Right lobe of liver (tissue), 6 donors: ENCODE measurements at regions of chr20 and their contacts with region 1.

Region 1: GRCh38 chr20:5205348-5206210 is 78.8 kb downstream of the CDS2 start:
- DNase-seq: peak; percentile 76 to 84 (median 82)
- ATAC-seq: peak; percentile 90 to 98 (median 94)
- H3K4me3 ChIP-seq: no peak overlapping the region
- H3K27ac ChIP-seq: no peak overlapping the region
- H3K4me1 ChIP-seq: peaks cover 0 to 23% (median 9%) of the 10 kb centered on the region in 4 donors
- H3K27me3 ChIP-seq: no peaks in the 10 kb centered on the region
- CTCF ChIP-seq: peak; percentile 85 to 97 (median 92)
- POLR2A ChIP-seq: no peak

Region 2: DNA sequence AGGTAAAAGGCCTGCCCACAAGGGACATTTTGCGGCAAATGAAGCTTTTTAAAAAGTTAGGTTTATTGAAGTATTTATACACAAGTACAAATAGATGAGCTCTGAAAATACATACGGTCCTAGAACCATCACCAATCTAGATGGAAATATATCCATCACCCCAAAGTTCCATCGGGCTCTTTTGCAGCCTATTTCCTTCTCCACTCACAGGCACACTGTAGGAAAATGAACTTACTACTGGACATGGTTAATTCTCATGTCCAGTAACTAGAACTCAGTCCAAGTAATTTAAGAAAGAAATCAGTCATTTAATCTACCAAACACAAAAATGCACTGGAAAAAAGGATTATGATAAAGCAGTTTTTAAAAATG is 92.0 kb before region 1 on chr20:
- intact Hi-C with region 1: no loop called
- DNase-seq: no peak
- ATAC-seq: no peak
- H3K4me3 ChIP-seq: peak overlapping the region; percentile 60 to 73 (median 69)
- H3K27ac ChIP-seq: peak overlapping the region; percentile 86 to 96 (median 87)
- H3K4me1 ChIP-seq: peaks cover 0 to 15% (median 6%) of the 10 kb centered on the region in 4 donors
- H3K27me3 ChIP-seq: no peaks in the 10 kb centered on the region
- CTCF ChIP-seq: no peak
- POLR2A ChIP-seq: no peak

Region 3: GRCh38 chr20:5126512-5127203 is 78.9 kb before region 1 on chr20 and contains the start of gene CDS2:
- intact Hi-C with region 1: no loop called
- DNase-seq: peak; percentile 100
- ATAC-seq: peak; percentile 90 to 97 (median 94)
- H3K4me3 ChIP-seq: peak within 1 kb of the TSS; percentile 62 to 92 (median 90)
- H3K27ac ChIP-seq: peak within 1 kb of the TSS; percentile 87 to 95 (median 92)
- H3K4me1 ChIP-seq: peaks cover 0 to 13% (median 7%) of the 10 kb centered on the region in 4 donors
- H3K27me3 ChIP-seq: no peaks in the 10 kb centered on the region
- CTCF ChIP-seq: peak; percentile 66 to 73 (median 67)
- POLR2A ChIP-seq: peak; percentile 90
- total RNA-seq, gene CDS2: 13.7 to 42.3 (median 31.6) TPM

Region 4: DNA sequence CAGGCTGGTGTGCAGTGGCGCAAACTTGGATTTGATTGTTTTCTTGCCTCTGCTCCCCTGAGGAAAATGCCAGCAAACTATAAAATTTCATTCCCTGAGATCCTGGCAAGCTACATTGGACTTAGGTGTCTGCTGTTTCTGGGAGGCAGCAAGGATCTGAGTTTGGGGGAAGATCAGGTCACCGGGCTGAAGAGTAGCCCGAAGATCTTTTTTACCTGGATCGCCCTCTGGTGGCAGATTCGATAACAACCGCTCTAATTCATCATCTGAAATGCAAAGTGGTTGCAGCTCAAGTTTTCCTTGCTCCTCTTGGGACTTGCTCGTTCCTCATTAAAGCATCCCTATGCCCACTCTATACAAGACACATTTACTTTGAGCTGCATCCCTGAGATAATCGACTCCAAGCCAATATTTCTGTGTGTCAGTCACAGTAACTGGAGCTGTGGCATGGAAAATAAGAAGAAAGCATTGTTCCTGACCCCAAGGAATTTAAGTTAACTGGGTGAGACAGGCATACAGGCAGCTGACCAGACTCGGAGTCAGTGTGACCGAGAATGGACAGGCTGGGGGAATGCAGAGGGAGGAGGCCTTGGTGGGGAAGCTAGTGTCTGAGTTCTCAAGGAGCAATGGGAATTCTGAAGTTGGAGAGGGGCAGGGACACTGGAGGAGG is 243.0 kb after region 1 on chr20:
- intact Hi-C with region 1: loop called (anchors 10 kb)
- DNase-seq: peak in 1 of 3 donors; percentile 55
- ATAC-seq: peak; percentile 66 to 75 (median 72)
- H3K4me3 ChIP-seq: no peak overlapping the region
- H3K27ac ChIP-seq: no peak overlapping the region
- H3K4me1 ChIP-seq: no peaks in the 10 kb centered on the region
- H3K27me3 ChIP-seq: no peaks in the 10 kb centered on the region
- CTCF ChIP-seq: peak; percentile 49 to 72 (median 67)
- POLR2A ChIP-seq: no peak